Posterior vena cava (tissue), 2 donors: ENCODE measurements at regions of chr14 and their contacts with region 1.

Region 1: GRCh38 chr14:87623616-87624015 is 369.4 kb downstream of the GALC start:
- DNase-seq: no peak

Region 2: DNA sequence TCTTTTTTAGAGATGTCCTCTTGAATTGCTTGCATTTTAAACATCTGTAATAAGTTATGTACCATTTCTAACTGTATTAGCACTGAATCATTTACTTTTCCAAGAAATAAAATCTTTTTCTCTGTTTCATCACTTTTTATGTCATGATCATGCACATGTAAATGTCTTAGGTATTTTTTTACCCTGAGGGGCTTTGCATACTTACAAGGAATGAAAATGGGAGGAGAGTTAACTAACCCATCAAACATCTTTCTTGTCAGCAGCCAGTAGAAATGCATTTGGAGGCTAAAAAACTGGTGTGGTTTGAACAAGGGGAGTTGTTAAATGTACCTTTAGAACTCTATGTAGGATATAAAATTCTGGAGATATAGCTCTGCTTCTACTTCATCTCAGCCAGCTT is 710.9 kb before region 1 on chr14:
- intact Hi-C with region 1: loop called (anchors 5 to 10 kb)
- DNase-seq: no peak